Astrocyte of the cerebellum (primary cell): ENCODE measurements at regions of chr9 and their contacts with region 1.

Region 1: DNA sequence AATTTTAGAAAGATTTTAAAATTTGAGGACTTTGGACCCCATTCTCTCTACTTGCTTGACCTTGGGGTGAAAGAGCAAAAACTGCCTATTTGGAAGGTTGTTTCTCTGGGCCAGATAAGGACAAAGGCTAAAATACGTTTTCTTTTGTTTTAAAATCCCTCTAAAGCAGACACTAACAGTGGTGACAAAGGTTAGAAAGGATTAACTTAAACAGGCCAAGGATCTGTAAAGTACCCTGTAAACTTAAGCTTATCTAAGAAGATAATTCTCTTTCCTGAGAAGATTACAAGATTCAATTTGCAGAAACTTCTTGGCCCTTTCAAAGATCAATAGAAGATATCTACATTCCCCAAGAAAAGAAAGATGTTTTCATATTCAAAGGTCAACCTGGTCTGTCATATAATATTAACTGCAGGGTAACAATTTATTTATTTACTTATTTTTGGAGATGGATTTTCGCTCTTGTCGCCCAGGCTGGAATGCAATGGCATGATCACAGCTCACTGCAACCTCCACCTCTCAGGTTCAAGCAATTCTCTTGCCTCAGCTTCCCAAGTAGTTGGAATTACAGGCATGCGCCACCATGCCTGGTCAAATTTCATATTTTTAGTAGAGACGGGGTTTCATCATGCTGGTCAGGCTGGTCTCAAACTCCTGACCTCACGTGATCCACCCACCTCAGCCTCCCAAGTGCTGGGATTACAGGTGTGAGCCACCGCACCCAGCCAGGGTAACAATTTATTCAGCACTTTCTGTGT is 11.9 kb downstream of the TRPM6 start:
- DNase-seq: no peak
- H3K4me3 ChIP-seq: no peak overlapping the region
- CTCF ChIP-seq: no peak

Region 2: GRCh38 chr9:74804018-74804385 is 71.8 kb before region 1 on chr9:
- in situ Hi-C with region 1: loop called (anchors 5 kb)
- DNase-seq: no peak
- H3K4me3 ChIP-seq: no peak overlapping the region
- CTCF ChIP-seq: no peak

Region 3: GRCh38 chr9:74920944-74921626 is 45.2 kb after region 1 on chr9:
- in situ Hi-C with region 1: loop called (anchors 5 kb)
- DNase-seq: no peak
- H3K4me3 ChIP-seq: no peak overlapping the region
- CTCF ChIP-seq: no peak

Region 4: GRCh38 chr9:74951725-74952151 is 75.9 kb after region 1 on chr9:
- in situ Hi-C with region 1: no loop called
- DNase-seq: no peak
- H3K4me3 ChIP-seq: peak overlapping the region; percentile 93
- CTCF ChIP-seq: no peak